CD8-positive, alpha-beta T cell (primary cell): ENCODE measurements at regions of chr19 and their contacts with region 1.

Region 1: GRCh38 chr19:17075035-17075863 is at the starts of genes HAUS8 and MYO9B:
- DNase-seq: peak; percentile 98 to 100 (median 100)
- ATAC-seq: peak; percentile 92
- H3K4me3 ChIP-seq: peak within 1 kb of the TSS; percentile 79 to 94
- H3K4me3 Mint-ChIP-seq: peak within 1 kb of the TSS; percentile 93
- H3K27ac ChIP-seq: peak within 1 kb of the TSS; percentile 85 to 88
- H3K27ac Mint-ChIP-seq: peak within 1 kb of the TSS; percentile 98
- H3K4me1 ChIP-seq: peaks cover 51% of the 10 kb centered on the region
- H3K4me1 Mint-ChIP-seq: peaks cover 62% of the 10 kb centered on the region
- H3K27me3 ChIP-seq: no peaks in the 10 kb centered on the region
- H3K27me3 Mint-ChIP-seq: no peaks in the 10 kb centered on the region
- CTCF ChIP-seq: no peak
- total RNA-seq, gene HAUS8: 29.3 to 33.9 TPM
- total RNA-seq, gene MYO9B: 221 to 238 TPM

Region 2: GRCh38 chr19:17090583-17090982 is 15.3 kb after region 1 on chr19:
- CTCF ChIA-PET with region 1: interaction called, 3 read pairs
- POLR2A ChIA-PET with region 1: interaction called, 4 read pairs
- intact Hi-C with region 1: loop called in 1 of 2 experiments (anchors 1 kb)
- DNase-seq: peak in 4 of 9 experiments; percentile 25 to 64 (median 38)
- ATAC-seq: peak; percentile 82
- H3K4me3 ChIP-seq: no peak overlapping the region
- H3K4me3 Mint-ChIP-seq: peak overlapping the region; percentile 6
- H3K27ac ChIP-seq: peak overlapping the region in 1 of 2 experiments; percentile 36
- H3K27ac Mint-ChIP-seq: peak overlapping the region; percentile 79
- H3K4me1 ChIP-seq: peaks cover 34% of the 10 kb centered on the region
- H3K4me1 Mint-ChIP-seq: peaks cover 66% of the 10 kb centered on the region
- H3K27me3 ChIP-seq: no peaks in the 10 kb centered on the region
- H3K27me3 Mint-ChIP-seq: no peaks in the 10 kb centered on the region
- CTCF ChIP-seq: no peak

Region 3: GRCh38 chr19:17183858-17184321 is 108.6 kb after region 1 on chr19:
- CTCF ChIA-PET with region 1: interaction called, 3 read pairs
- POLR2A ChIA-PET with region 1: interaction called, 10 read pairs
- intact Hi-C with region 1: loop called in 1 of 2 experiments (anchors 2 kb)
- DNase-seq: peak in 6 of 9 experiments; percentile 19 to 71 (median 42)
- ATAC-seq: peak; percentile 56
- H3K4me3 ChIP-seq: peak overlapping the region; percentile 36 to 52
- H3K4me3 Mint-ChIP-seq: peak overlapping the region; percentile 92
- H3K27ac ChIP-seq: peak overlapping the region; percentile 57 to 78
- H3K27ac Mint-ChIP-seq: peak overlapping the region; percentile 97
- H3K4me1 ChIP-seq: peaks cover 20% of the 10 kb centered on the region
- H3K4me1 Mint-ChIP-seq: peaks cover 32% of the 10 kb centered on the region
- H3K27me3 ChIP-seq: no peaks in the 10 kb centered on the region
- H3K27me3 Mint-ChIP-seq: no peaks in the 10 kb centered on the region
- CTCF ChIP-seq: no peak

Region 4: GRCh38 chr19:17226002-17226933 is 151.0 kb after region 1 on chr19 and contains the start of gene OCEL1:
- CTCF ChIA-PET with region 1: no interaction called
- POLR2A ChIA-PET with region 1: interaction called, 11 read pairs
- intact Hi-C with region 1: loop called in 1 of 2 experiments (anchors 1 kb)
- DNase-seq: peak; percentile 92 to 99 (median 96)
- ATAC-seq: peak; percentile 91
- H3K4me3 ChIP-seq: peak within 1 kb of the TSS; percentile 71 to 100
- H3K4me3 Mint-ChIP-seq: peak within 1 kb of the TSS; percentile 91
- H3K27ac ChIP-seq: peak within 1 kb of the TSS; percentile 89 to 96
- H3K27ac Mint-ChIP-seq: peak within 1 kb of the TSS; percentile 95
- H3K4me1 ChIP-seq: peaks cover 13% of the 10 kb centered on the region
- H3K4me1 Mint-ChIP-seq: peaks cover 8% of the 10 kb centered on the region
- H3K27me3 ChIP-seq: no peaks in the 10 kb centered on the region
- H3K27me3 Mint-ChIP-seq: no peaks in the 10 kb centered on the region
- CTCF ChIP-seq: no peak
- total RNA-seq, gene OCEL1: 20.9 to 24.9 TPM

Region 5: GRCh38 chr19:17266975-17267788 is 191.9 kb after region 1 on chr19 and contains the start of gene BABAM1:
- CTCF ChIA-PET with region 1: interaction called, 3 read pairs
- POLR2A ChIA-PET with region 1: interaction called, 5 read pairs
- intact Hi-C with region 1: loop called (anchors 1 kb)
- DNase-seq: peak; percentile 81 to 98 (median 92)
- ATAC-seq: peak; percentile 93
- H3K4me3 ChIP-seq: peak within 1 kb of the TSS; percentile 72 to 82
- H3K4me3 Mint-ChIP-seq: peak within 1 kb of the TSS; percentile 79
- H3K27ac ChIP-seq: peak within 1 kb of the TSS; percentile 61 to 77
- H3K27ac Mint-ChIP-seq: peak within 1 kb of the TSS; percentile 63
- H3K4me1 ChIP-seq: peaks cover 14% of the 10 kb centered on the region
- H3K4me1 Mint-ChIP-seq: peaks cover 18% of the 10 kb centered on the region
- H3K27me3 ChIP-seq: no peaks in the 10 kb centered on the region
- H3K27me3 Mint-ChIP-seq: no peaks in the 10 kb centered on the region
- CTCF ChIP-seq: no peak
- total RNA-seq, gene BABAM1: 46.9 to 58.0 TPM

Region 6: DNA sequence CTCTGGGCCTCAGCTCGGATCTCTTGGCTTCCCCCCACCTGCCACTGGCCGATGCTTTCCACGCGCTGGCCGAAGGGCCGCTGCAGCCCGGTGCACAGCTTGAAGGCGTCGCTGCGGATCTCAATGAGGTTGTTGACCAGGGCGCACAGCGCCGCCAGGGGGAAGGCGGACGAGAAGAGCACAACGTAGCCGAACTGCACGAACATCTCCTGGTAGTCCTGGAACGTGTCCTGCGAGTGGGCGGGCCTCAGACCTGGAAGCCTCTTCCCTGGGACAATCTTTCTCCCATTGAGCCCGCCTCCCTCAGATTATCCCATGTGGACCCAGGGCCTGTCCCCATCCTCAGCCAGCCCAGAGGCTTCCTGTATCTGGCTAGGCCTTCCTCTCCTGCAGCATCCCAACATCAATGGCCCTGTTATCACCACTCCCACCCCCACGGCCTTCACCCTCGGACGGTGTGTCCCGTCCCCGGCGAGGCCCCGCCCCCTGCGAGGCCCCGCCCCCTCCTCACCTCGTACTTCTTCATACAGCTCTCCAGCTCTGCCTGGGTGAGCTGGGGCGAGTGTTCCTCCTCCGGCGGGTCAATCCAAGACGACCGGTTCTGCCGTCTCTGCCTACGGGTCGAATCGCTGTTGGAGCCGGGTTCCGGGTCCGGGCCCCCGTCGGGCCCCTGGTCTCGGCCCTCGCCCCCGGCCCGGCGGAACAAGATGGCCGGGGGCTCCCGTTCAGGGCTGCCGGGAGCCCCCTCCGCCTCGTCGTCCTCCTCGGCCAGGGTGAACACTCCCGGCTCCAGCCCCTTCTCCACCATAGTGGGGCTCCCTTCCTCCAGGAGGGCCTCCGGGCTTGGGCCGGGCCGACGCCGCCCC is 252.6 kb after region 1 on chr19:
- CTCF ChIA-PET with region 1: no interaction called
- POLR2A ChIA-PET with region 1: no interaction called
- intact Hi-C with region 1: loop called in 1 of 2 experiments (anchors 2 kb)
- DNase-seq: peak in 8 of 9 experiments; percentile 37 to 75 (median 55)
- ATAC-seq: peak; percentile 74
- H3K4me3 ChIP-seq: peak overlapping the region; percentile 59 to 73
- H3K4me3 Mint-ChIP-seq: peak overlapping the region; percentile 81
- H3K27ac ChIP-seq: peak overlapping the region; percentile 27 to 53
- H3K27ac Mint-ChIP-seq: peak overlapping the region; percentile 60
- H3K4me1 ChIP-seq: peaks cover 12% of the 10 kb centered on the region
- H3K4me1 Mint-ChIP-seq: peaks cover 22% of the 10 kb centered on the region
- H3K27me3 ChIP-seq: no peaks in the 10 kb centered on the region
- H3K27me3 Mint-ChIP-seq: no peaks in the 10 kb centered on the region
- CTCF ChIP-seq: no peak